ENCODE measurements at regions of chr2 and their contacts with region 1.

Region 1: DNA sequence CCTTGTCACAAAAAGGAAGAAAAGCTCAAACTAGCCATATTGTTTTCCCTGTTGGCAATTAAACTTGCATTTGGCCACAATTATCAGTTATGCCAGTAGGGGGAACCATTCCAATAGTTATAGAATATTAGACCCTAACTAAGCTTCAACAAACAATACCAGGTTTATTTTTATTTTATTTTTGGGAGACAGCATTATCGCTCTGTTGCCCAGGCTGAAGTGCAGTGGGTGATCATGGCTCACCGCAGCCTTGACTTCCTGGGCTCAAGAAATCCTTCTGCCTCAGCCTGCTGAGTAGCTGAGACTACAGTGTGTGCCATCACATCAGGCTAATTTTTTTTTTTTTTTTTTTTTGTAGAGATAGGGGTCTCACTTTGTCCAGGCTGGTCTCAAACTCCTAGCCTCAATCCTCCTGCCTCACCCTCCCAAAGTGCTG is 102.1 kb downstream of the ATAD2B start:
- DNase-seq: peak; percentile 67
- H3K4me3 Mint-ChIP-seq: no peak overlapping the region
- H3K27ac Mint-ChIP-seq: no peak overlapping the region
- H3K4me1 Mint-ChIP-seq: peaks cover 27% of the 10 kb centered on the region
- H3K27me3 Mint-ChIP-seq: no peaks in the 10 kb centered on the region
- CTCF ChIP-seq: peak; percentile 61

Region 2: DNA sequence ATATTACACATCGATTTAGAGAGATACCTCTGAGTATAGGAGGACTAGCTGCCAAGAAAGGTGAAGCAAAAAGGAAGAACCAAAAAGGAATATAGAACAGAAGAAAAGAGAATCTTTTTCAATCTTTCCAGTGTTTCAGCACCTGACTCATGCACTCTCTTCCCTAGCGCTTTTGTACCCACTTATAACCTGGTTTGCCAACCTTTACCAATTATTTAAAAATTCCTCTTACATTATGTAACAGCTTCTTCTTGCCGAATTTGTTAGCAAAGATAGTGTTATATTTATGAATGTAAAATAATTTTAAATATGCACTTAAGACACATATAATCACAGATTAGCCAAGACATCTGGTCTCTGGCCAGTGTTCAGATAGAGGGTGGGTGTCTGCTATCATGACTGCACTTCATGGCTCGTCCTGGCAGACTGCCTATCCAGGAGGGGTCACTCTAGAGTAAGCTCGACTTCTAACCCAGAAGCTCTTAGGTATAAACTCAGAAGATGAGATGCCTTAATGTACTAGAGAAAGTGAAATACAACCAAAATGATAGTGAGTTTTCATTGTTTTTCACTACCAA is 20.7 kb before region 1 on chr2:
- CTCF ChIA-PET with region 1: interaction called, 9 read pairs
- POLR2A ChIA-PET with region 1: interaction called, 13 read pairs
- intact Hi-C with region 1: no loop called
- DNase-seq: peak; percentile 75
- H3K4me3 Mint-ChIP-seq: peak overlapping the region; percentile 58
- H3K27ac Mint-ChIP-seq: peak overlapping the region; percentile 83
- H3K4me1 Mint-ChIP-seq: peaks cover 24% of the 10 kb centered on the region
- H3K27me3 Mint-ChIP-seq: no peaks in the 10 kb centered on the region
- CTCF ChIP-seq: peak; percentile 38

Region 3: GRCh38 chr2:23988371-23988770 is 163.6 kb after region 1 on chr2:
- CTCF ChIA-PET with region 1: interaction called, 4 read pairs
- POLR2A ChIA-PET with region 1: no interaction called
- intact Hi-C with region 1: loop called (anchors 1 kb)
- DNase-seq: peak; percentile 54
- H3K4me3 Mint-ChIP-seq: no peak overlapping the region
- H3K27ac Mint-ChIP-seq: no peak overlapping the region
- H3K4me1 Mint-ChIP-seq: peaks cover 13% of the 10 kb centered on the region
- H3K27me3 Mint-ChIP-seq: no peaks in the 10 kb centered on the region
- CTCF ChIP-seq: peak; percentile 62

Region 4: DNA sequence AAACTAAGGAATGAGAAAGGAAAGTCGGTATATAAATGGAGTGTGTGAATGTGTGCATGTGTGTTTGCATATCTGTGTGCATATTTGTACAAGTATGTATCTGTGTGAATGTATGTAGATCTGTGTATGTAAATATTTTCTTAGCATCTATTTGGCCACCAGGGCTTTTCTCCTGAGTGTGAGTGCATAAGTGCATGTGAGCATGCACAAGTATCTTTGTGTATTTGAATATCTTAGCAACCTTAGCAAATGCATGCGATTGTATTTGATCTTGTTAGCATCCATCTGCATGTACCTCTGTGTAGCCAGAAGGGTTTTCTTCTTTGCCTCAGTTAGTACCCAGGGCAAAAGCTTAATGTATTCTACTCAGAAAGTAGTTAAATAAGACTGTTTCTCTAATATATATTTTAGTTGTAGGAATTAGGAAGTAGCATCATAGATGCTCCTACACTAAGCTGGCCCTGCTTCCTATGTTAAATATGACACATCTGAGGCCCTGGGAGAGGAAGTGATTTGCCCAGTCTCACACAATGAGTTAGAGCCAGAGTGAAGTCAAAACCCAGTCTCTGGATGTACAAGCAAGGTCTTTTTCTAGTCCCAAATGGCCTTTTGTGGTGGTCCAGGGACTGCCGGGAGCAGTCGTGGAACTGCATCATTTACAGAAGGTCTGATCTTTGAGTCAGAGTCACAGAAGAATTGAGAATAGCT is 233.9 kb after region 1 on chr2:
- CTCF ChIA-PET with region 1: no interaction called
- POLR2A ChIA-PET with region 1: no interaction called
- intact Hi-C with region 1: loop called (anchors 5 kb)
- DNase-seq: no peak
- H3K4me3 Mint-ChIP-seq: no peak overlapping the region
- H3K27ac Mint-ChIP-seq: no peak overlapping the region
- H3K4me1 Mint-ChIP-seq: no peaks in the 10 kb centered on the region
- H3K27me3 Mint-ChIP-seq: no peaks in the 10 kb centered on the region
- CTCF ChIP-seq: no peak

Region 5: DNA sequence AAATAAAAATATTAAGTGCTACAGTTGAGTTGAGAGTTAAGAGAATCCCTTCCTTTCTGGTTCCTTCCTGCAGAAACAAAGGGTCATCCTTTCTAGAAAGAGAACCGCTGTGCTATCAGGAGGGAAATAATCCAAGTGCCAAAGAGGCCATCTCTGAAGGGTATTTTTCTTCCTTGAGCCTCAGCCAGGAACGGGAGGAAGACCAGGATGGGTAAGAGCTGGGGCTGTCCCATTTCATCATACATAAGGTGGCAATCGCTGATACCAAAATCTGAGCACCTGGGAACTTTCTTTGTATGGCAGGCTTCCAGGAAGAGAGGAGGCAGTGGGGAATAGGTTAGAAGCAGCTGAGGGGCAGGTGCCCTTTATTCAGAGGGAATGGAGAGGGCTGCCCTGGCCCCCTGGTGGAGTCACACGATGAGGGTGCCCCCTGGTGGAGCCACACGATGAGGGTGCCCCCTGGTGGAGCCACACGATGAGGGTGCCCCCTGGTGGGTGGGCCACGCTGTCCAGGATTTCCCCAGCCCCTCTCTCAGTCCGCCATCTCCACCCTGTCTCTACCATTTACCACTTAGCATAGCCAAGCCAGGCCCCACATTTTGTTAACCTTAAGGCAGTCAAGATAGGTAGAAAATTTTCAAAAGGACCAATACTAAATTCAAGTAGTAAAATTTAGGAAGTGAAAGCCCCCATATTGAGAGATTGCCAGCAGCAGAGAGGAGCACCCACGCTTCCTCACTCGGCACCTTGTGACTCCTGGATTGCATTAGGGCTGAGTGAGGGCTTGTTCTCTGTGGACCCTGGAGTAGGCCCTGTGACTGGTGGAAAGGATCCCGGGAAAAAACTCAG is 339.6 kb after region 1 on chr2:
- CTCF ChIA-PET with region 1: no interaction called
- POLR2A ChIA-PET with region 1: no interaction called
- intact Hi-C with region 1: loop called (anchors 10 kb)
- DNase-seq: peak; percentile 38
- H3K4me3 Mint-ChIP-seq: no peak overlapping the region
- H3K27ac Mint-ChIP-seq: no peak overlapping the region
- H3K4me1 Mint-ChIP-seq: no peaks in the 10 kb centered on the region
- H3K27me3 Mint-ChIP-seq: no peaks in the 10 kb centered on the region
- CTCF ChIP-seq: peak; percentile 60